Cardiac septum (tissue), 1 donor: ENCODE measurements at regions of chr7 and their contacts with region 1.

Region 1: DNA sequence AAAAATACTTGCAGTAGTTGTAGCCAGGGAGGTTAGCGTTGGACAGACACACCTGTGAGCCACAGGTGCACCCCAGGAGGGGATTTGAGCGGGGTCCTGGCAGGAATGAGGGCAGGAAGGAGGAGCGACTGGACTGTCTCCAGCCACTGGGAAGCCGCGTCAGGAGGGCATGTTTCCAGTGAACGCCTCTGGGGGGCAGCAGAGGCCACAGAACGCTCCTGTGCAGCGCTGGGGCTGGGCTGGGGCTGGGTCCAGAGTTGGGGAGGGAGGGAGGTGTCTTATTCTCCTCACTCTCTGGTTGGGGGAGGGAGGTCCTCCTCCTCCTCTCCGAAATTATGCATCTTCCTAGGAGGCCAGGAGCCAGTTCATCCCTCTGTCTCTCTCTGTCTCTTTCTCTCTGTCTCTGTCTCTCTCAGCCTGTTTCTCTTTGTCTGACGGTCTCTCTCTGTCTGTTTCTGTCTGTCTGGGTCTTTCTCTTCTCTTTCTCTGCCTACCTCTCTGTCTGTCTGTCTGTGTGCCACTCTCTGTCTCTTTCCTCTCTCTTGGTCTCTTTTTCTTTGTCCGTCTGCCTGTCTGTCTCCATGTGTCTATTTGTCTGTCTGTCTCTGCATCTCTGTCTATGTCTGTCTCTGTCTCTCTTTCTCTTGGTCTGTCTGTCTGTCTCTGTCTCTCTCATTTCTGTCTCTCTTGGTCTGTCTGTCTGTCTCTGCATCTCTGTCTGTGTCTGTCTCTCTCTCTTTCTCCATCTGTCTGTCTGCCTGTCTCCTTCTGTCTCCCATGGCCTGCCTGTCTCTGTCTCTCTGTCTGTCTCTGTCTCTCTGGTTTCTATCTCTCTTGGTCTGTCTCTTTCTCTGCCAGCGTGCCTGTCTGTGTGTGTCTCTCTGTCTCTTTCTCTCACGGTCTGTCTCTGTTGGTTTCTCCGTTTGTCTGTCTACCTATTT is 9.9 kb upstream of the PSMG3 start:
- DNase-seq: peak; percentile 90

Region 2: GRCh38 chr7:1548438-1548831 is 31.3 kb before region 1 on chr7:
- intact Hi-C with region 1: no loop called
- DNase-seq: no peak

Region 3: DNA sequence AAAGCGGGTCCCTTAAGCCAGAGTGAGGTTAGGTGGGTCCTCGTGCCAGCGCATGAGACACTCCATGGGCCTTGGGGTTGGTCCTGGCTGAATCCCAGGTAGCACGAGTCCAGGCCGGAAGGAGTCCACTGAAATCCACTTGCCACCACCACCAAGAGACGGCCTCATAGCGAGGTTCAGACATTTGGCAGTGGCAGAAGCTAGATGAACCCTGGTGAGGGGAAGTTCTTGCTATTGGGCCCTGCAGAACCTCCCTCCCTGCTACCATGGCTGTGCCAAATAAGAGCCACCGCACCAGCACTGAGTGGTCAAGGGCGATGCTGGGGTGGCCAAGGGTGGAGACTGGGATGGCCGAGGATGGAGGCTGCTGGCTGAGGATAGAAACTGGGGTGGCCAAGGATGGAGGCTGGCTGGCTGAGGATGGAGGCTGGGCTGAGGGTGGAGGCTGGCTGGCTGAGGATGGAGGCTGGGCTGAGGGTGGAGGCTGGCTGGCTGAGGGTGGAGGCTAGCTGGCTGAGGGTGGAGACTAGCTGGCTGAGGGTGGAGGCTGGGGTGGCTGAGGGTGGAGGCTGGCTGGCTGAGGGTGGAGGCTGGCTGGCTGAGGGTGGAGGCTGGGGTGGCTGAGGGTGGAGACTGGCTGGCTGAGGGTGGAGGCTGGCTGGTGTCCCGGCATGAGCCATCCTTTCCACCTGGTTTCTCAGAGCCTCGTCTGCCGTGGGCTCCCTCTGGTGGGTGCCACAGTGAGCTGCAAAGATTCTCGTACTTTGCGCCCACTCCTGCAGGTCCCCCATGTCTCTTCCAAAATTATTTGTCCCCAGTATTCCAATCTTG is 178.5 kb after region 1 on chr7:
- intact Hi-C with region 1: loop called (anchors 5 kb)
- DNase-seq: peak; percentile 80

Region 4: DNA sequence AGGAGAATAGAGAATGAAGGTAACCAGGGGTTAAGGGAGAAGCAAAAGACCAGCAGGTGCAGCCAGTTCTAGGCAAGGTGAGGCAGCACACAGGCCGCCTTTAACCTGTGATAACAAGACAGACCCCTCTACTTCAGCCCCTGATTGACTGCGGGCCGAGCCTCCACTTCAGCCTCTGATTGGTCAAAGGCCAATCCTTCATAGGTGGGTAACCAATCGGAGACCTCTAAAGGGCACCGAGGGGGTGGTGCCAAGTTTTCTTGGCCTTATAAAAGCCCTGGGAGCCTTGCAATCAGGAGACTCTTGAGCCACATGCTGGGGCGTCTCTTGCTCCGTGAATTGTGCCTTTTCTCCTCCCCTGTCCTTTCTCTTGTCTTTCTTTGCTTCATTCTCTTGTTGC is 189.1 kb after region 1 on chr7:
- intact Hi-C with region 1: no loop called
- DNase-seq: no peak

Region 5: DNA sequence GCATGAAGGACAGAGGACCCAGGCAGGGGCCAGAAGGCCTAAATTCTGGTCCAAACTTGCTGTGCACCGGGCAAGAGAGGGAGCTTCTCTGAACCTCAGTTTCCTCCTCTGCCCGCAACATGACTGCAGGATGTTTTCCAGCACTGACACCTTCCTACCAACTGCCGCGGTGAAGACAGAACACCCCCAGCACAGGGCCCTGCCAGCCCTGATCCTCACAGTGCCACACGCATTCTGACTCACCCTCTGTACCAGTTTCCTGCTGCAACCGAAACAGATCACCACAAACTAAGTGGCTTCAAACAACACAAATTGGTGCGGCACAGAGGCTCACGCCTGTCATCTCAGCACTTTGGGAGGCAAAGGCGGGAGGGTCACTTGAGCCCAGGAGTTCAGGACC is 634.9 kb after region 1 on chr7:
- intact Hi-C with region 1: loop called (anchors 5 kb)
- DNase-seq: no peak